ENCODE measurements at regions of chr5 and their contacts with region 1.

Region 1: GRCh38 chr5:160199410-160199911 is 29.8 kb upstream of the FABP6 start:
- DNase-seq: no peak
- H3K4me3 ChIP-seq: peak overlapping the region; percentile 50
- CTCF ChIP-seq: peak; percentile 82

Region 2: GRCh38 chr5:158198636-158199035 is 2000.8 kb before region 1 on chr5:
- CTCF ChIA-PET with region 1: no interaction called
- POLR2A ChIA-PET with region 1: no interaction called
- DNase-seq: no peak
- H3K4me3 ChIP-seq: no peak overlapping the region
- CTCF ChIP-seq: no peak

Region 3: GRCh38 chr5:159987031-159987674 is 212.3 kb before region 1 on chr5:
- CTCF ChIA-PET with region 1: no interaction called
- POLR2A ChIA-PET with region 1: no interaction called
- DNase-seq: no peak
- H3K4me3 ChIP-seq: peak overlapping the region; percentile 57
- CTCF ChIP-seq: peak; percentile 90

Region 4: DNA sequence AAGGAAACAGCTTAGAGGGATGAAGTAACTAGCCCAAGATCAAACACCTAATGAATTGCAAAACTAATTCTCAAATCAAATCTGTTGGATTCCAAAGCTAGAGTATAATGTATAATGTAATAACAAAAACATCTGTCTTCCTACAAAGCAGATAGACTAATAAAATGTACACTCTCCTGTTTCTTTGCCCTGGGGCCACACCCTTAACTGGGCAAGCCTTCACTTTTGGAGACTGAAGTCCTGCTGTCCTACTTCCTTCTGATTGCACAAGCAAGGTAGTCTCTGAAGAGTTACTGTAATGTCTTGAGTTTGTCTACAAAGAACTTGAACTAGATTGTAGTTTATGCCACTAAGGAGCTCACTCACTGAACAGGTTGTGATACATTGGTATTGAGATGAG is 188.0 kb before region 1 on chr5:
- CTCF ChIA-PET with region 1: no interaction called
- POLR2A ChIA-PET with region 1: no interaction called
- DNase-seq: no peak
- H3K4me3 ChIP-seq: no peak overlapping the region
- CTCF ChIP-seq: no peak

Region 5: DNA sequence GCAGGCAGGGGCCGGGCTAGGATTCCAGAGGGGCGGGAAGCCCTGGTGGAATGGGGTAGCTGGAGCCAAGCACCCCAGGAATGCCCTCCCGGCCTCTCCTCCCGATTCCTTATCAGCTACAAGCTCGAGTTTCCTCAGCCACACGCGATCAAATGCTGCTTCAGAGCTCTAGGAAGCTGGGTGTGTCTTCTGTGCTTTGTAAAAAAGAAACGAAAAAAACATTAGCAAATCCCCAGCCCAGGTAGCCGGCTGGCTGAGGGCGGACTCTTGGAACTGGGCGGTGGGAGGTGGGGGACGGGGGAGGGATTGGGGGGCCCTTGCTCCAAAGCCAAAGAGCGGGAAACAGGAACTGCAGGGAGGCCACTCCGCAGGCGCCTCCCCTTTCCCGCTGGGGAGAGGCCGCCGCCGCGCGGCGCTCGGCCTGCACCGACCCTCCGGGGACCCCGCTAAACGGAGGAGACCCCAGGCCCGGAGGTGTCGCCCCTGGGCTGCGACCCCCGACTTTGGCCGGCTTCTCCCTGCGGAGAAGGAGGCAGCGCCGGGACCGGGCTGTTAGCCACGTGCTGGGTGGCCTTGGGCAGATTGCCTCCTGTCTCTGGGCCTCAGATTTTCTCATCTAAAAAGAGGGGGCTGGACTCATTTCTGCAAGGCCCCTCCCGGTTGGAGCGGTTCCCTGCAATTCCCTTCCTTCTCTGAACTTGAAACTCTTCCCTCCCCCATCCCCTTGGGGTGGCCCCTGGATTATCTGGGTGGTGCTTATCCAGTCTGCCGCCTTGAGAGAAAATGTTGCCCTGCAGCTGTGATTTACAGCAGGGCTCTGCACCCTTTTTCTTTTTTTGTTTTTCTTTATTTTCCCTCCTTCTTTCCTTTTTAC is 11.1 kb before region 1 on chr5:
- CTCF ChIA-PET with region 1: interaction called, 52 read pairs
- POLR2A ChIA-PET with region 1: no interaction called
- DNase-seq: no peak
- H3K4me3 ChIP-seq: peak overlapping the region; percentile 44
- CTCF ChIP-seq: peak; percentile 1

Region 6: DNA sequence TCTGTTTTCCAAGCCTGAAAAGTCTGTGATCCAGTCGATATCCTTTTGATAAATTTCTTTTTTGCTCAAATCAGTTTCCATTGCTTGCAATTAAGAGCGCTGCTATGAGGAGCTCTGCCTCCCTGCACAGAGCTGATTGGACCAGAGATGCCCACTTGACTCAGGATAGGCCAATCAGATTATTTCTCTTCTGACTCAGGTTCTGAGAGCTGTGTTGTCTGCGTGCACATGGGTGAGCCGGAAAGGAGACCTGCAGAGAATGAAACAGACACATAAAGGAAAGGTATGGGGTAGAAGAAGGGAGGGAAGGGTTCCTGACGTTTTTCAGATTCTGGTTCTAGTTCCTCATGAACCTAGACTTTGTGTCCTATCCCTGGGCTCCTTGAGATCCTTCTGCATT is 14.1 kb after region 1 on chr5:
- CTCF ChIA-PET with region 1: interaction called, 14 read pairs
- POLR2A ChIA-PET with region 1: no interaction called
- DNase-seq: no peak
- H3K4me3 ChIP-seq: no peak overlapping the region
- CTCF ChIP-seq: no peak